MCF 10A (cell line): ENCODE measurements at regions of chr5 and their contacts with region 1.

Region 1: GRCh38 chr5:149618581-149619251 is 37.4 kb downstream of the ARHGEF37 start:
- DNase-seq: peak; percentile 86
- H3K4me3 Mint-ChIP-seq: no peak overlapping the region
- H3K27ac Mint-ChIP-seq: peak overlapping the region; percentile 28
- H3K4me1 Mint-ChIP-seq: peaks cover 16% of the 10 kb centered on the region
- H3K27me3 Mint-ChIP-seq: no peaks in the 10 kb centered on the region
- CTCF ChIP-seq: peak; percentile 92

Region 2: DNA sequence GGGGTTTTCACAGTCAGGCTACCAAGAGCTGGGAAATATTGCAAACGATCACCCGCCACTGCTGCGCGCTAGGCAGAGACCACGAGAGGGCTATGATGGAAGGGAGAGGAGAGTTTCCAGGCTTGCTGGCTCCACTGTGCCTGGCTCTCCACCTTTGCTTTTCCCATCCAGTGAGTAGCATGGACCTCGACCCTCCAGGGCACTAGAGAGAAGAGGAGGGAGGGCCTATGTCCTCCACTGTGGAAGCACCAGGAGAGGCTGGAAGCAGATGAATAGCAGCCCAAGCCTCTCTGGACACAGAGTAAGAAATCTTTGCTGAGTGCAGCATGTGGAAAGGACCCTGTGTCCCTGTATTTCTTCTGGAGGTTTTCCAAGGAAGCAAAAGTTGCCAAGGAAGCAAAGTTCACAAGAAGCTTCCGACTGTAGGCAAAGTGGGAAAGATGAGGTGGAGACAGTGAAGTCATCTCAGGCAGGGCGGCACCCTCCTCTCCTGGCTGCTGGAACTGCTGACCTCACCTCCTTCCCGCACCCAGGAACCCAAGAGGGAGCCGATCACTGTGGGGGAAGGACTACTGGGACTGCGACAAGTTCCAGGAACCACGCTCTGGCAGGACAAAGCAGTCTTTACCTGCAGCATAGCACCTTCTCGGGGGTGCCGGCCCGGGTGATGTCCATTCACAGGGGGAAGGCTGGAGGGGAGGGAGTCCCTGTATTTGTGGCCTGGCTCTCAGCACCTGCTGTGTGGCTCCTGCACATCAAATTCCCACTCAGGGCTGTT is 147.1 kb before region 1 on chr5:
- CTCF ChIA-PET with region 1: interaction called, 10 read pairs
- POLR2A ChIA-PET with region 1: interaction called, 3 read pairs
- intact Hi-C with region 1: no loop called
- DNase-seq: peak; percentile 63
- H3K4me3 Mint-ChIP-seq: no peak overlapping the region
- H3K27ac Mint-ChIP-seq: peak overlapping the region; percentile 64
- H3K4me1 Mint-ChIP-seq: peaks cover 28% of the 10 kb centered on the region
- H3K27me3 Mint-ChIP-seq: no peaks in the 10 kb centered on the region
- CTCF ChIP-seq: no peak

Region 3: DNA sequence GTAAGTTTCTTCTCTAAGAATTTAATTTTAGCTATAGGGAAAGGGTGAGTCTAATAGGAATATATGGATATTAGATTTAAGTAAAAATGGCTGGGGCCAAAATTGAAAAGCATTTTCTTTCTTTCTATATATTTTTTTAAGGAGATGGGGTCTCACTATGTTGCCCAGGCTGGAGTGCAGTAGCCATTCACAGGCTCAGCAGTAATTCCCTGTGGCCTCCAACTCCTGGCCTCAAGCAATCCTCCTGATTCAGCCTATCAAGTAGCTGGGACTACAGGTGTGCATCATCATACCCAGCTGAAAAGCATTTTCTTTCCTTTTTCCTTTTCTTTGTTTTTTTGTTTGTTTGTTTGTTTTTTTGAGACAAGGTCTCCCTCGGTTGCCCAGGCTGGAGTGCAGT is 108.6 kb before region 1 on chr5:
- CTCF ChIA-PET with region 1: interaction called, 14 read pairs
- POLR2A ChIA-PET with region 1: interaction called, 8 read pairs
- intact Hi-C with region 1: no loop called
- DNase-seq: no peak
- H3K4me3 Mint-ChIP-seq: no peak overlapping the region
- H3K27ac Mint-ChIP-seq: no peak overlapping the region
- H3K4me1 Mint-ChIP-seq: peaks cover 8% of the 10 kb centered on the region
- H3K27me3 Mint-ChIP-seq: no peaks in the 10 kb centered on the region
- CTCF ChIP-seq: no peak

Region 4: GRCh38 chr5:149544028-149544420 is 74.7 kb before region 1 on chr5:
- CTCF ChIA-PET with region 1: interaction called, 40 read pairs
- POLR2A ChIA-PET with region 1: interaction called, 56 read pairs
- intact Hi-C with region 1: no loop called
- DNase-seq: no peak
- H3K4me3 Mint-ChIP-seq: peak overlapping the region; percentile 14
- H3K27ac Mint-ChIP-seq: no peak overlapping the region
- H3K4me1 Mint-ChIP-seq: peaks cover 33% of the 10 kb centered on the region
- H3K27me3 Mint-ChIP-seq: no peaks in the 10 kb centered on the region
- CTCF ChIP-seq: no peak

Region 5: GRCh38 chr5:149581192-149581861 is 37.4 kb before region 1 on chr5 and contains the start of gene ARHGEF37:
- CTCF ChIA-PET with region 1: interaction called, 58 read pairs
- POLR2A ChIA-PET with region 1: interaction called, 85 read pairs
- intact Hi-C with region 1: loop called (anchors 1 kb)
- DNase-seq: peak; percentile 83
- H3K4me3 Mint-ChIP-seq: peak within 1 kb of the TSS; percentile 75
- H3K27ac Mint-ChIP-seq: peak within 1 kb of the TSS; percentile 76
- H3K4me1 Mint-ChIP-seq: peaks cover 26% of the 10 kb centered on the region
- H3K27me3 Mint-ChIP-seq: no peaks in the 10 kb centered on the region
- CTCF ChIP-seq: no peak
- total RNA-seq, gene ARHGEF37: 3.9 and 5.1 TPM in 2 replicates

Region 6: GRCh38 chr5:149596713-149597112 is 22.0 kb before region 1 on chr5:
- CTCF ChIA-PET with region 1: interaction called, 27 read pairs
- POLR2A ChIA-PET with region 1: interaction called, 5 read pairs
- intact Hi-C with region 1: no loop called
- DNase-seq: no peak
- H3K4me3 Mint-ChIP-seq: no peak overlapping the region
- H3K27ac Mint-ChIP-seq: peak overlapping the region; percentile 62
- H3K4me1 Mint-ChIP-seq: peaks cover 25% of the 10 kb centered on the region
- H3K27me3 Mint-ChIP-seq: no peaks in the 10 kb centered on the region
- CTCF ChIP-seq: no peak

Region 7: GRCh38 chr5:149902177-149902576 is 283.5 kb after region 1 on chr5:
- CTCF ChIA-PET with region 1: no interaction called
- POLR2A ChIA-PET with region 1: no interaction called
- intact Hi-C with region 1: no loop called
- DNase-seq: peak; percentile 49
- H3K4me3 Mint-ChIP-seq: no peak overlapping the region
- H3K27ac Mint-ChIP-seq: peak overlapping the region; percentile 34
- H3K4me1 Mint-ChIP-seq: peaks cover 23% of the 10 kb centered on the region
- H3K27me3 Mint-ChIP-seq: no peaks in the 10 kb centered on the region
- CTCF ChIP-seq: peak; percentile 13